ENCODE measurements at regions of chr1 and their contacts with region 1.

Region 1: DNA sequence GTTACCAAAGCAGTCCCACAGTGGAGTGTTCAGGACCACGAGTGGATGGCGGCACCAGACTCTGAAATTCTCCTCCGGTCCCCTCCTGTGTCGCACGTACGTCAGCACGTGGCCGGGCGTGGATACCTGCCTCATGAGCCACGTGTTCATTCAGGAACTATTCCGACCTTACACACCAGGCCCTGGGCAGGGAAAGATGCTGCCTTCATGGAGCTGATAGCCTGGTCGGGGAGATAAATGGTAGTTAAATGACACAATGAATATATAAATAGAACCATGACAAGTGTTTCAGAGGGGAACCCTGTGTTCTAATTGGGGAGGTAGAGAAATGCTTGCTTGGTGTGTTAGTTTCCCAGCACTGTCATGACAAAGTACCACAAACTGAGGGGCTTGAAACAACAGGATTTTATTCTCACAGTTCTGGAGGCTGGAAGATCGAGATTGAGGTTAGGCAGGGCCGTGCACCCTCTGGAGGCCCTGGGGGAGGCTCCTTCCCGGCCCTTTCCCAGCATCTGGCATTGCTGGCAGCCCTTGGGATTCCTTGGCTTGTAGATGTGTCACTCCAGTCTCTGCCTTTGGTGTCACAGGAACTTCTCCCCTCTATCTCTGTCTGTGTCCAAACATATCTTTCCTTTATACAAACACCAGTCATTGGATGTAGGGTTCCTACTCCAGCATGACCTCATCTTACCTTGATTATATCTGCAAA is 28.9 kb upstream of the GPR137B start:
- DNase-seq: no peak
- H3K4me3 ChIP-seq: no peak overlapping the region
- H3K27ac ChIP-seq: no peak overlapping the region
- H3K4me1 ChIP-seq: no peaks in the 10 kb centered on the region
- H3K27me3 ChIP-seq: no peaks in the 10 kb centered on the region
- CTCF ChIP-seq: no peak
- POLR2A ChIP-seq: no peak

Region 2: GRCh38 chr1:236168716-236169429 is 55.4 kb after region 1 on chr1:
- intact Hi-C with region 1: no loop called
- DNase-seq: peak; percentile 55 to 57
- H3K4me3 ChIP-seq: no peak overlapping the region
- H3K27ac ChIP-seq: no peak overlapping the region
- H3K4me1 ChIP-seq: no peaks in the 10 kb centered on the region
- H3K27me3 ChIP-seq: no peaks in the 10 kb centered on the region
- CTCF ChIP-seq: no peak
- POLR2A ChIP-seq: no peak

Region 3: GRCh38 chr1:236489710-236490377 is 376.4 kb after region 1 on chr1:
- intact Hi-C with region 1: loop called (anchors 10 kb)
- DNase-seq: no peak
- H3K4me3 ChIP-seq: no peak overlapping the region
- H3K27ac ChIP-seq: no peak overlapping the region
- H3K4me1 ChIP-seq: no peaks in the 10 kb centered on the region
- H3K27me3 ChIP-seq: no peaks in the 10 kb centered on the region
- CTCF ChIP-seq: peak; percentile 41 to 60 (median 48)
- POLR2A ChIP-seq: no peak